ENCODE measurements at regions of chr2 and their contacts with region 1.

Region 1: GRCh38 chr2:136423516-136423996 is 305.6 kb upstream of the CXCR4 start:
- DNase-seq: peak; percentile 65 to 72 (median 71)
- H3K4me3 ChIP-seq: peak overlapping the region; percentile 53 to 59
- H3K4me3 Mint-ChIP-seq: peak overlapping the region; percentile 77 to 90 (median 84)
- H3K27ac ChIP-seq: no peak overlapping the region
- H3K27ac Mint-ChIP-seq: peak overlapping the region in 6 of 7 donors; percentile 4 to 87 (median 68)
- H3K4me1 ChIP-seq: peaks cover 17% of the 10 kb centered on the region
- H3K4me1 Mint-ChIP-seq: peaks cover 11 to 21% (median 14%) of the 10 kb centered on the region in 4 donors
- H3K27me3 ChIP-seq: peaks cover 9% of the 10 kb centered on the region
- H3K27me3 Mint-ChIP-seq: peaks cover 18 to 23% of the 10 kb centered on the region in 2 donors

Region 2: GRCh38 chr2:136408795-136409194 is 14.8 kb before region 1 on chr2:
- CTCF ChIA-PET with region 1: interaction called, 10 read pairs
- POLR2A ChIA-PET with region 1: no interaction called
- intact Hi-C with region 1: no loop called
- DNase-seq: no peak
- H3K4me3 ChIP-seq: no peak overlapping the region
- H3K4me3 Mint-ChIP-seq: no peak overlapping the region
- H3K27ac ChIP-seq: no peak overlapping the region
- H3K27ac Mint-ChIP-seq: no peak overlapping the region
- H3K4me1 ChIP-seq: no peaks in the 10 kb centered on the region
- H3K4me1 Mint-ChIP-seq: no peaks in the 10 kb centered on the region
- H3K27me3 ChIP-seq: peaks cover 11% of the 10 kb centered on the region
- H3K27me3 Mint-ChIP-seq: peaks cover 30 to 31% of the 10 kb centered on the region in 2 donors

Region 3: DNA sequence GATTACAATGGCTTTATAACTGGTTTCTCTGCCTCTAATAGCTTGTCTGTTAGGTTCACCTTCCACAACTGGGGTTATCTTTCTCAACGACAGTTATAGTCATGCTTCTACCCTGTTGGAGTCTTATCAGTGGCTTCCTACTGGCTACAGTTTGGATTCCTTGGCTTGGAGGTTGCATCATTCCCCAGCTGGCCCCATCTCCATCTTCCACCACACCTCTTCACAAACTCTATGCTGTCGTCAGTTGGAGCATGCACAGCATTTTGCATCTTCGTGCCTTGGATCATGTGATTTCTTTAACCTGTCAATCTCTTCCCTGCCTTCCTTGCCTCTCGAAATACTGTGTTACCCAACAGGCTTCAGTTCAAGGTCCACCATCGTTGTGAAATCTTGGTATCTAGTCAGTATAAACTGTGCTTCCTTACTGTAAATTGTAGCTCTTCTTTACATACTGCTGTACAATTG is 10.7 kb after region 1 on chr2:
- CTCF ChIA-PET with region 1: interaction called, 10 read pairs
- POLR2A ChIA-PET with region 1: no interaction called
- intact Hi-C with region 1: no loop called
- DNase-seq: no peak
- H3K4me3 ChIP-seq: no peak overlapping the region
- H3K4me3 Mint-ChIP-seq: no peak overlapping the region
- H3K27ac ChIP-seq: no peak overlapping the region
- H3K27ac Mint-ChIP-seq: no peak overlapping the region
- H3K4me1 ChIP-seq: no peaks in the 10 kb centered on the region
- H3K4me1 Mint-ChIP-seq: no peaks in the 10 kb centered on the region
- H3K27me3 ChIP-seq: no peaks in the 10 kb centered on the region
- H3K27me3 Mint-ChIP-seq: peaks cover 5 to 14% of the 10 kb centered on the region in 2 donors

Region 4: GRCh38 chr2:137838255-137839092 is 1414.9 kb after region 1 on chr2:
- CTCF ChIA-PET with region 1: interaction called, 31 read pairs
- POLR2A ChIA-PET with region 1: no interaction called
- intact Hi-C with region 1: no loop called
- DNase-seq: peak in 4 of 5 donors; percentile 27 to 43 (median 36)
- H3K4me3 ChIP-seq: no peak overlapping the region
- H3K4me3 Mint-ChIP-seq: no peak overlapping the region
- H3K27ac ChIP-seq: no peak overlapping the region
- H3K27ac Mint-ChIP-seq: no peak overlapping the region
- H3K4me1 ChIP-seq: no peaks in the 10 kb centered on the region
- H3K4me1 Mint-ChIP-seq: no peaks in the 10 kb centered on the region
- H3K27me3 ChIP-seq: no peaks in the 10 kb centered on the region
- H3K27me3 Mint-ChIP-seq: peaks cover 3 to 6% of the 10 kb centered on the region in 2 donors